Heart left ventricle (tissue), 16 donors: ENCODE measurements at regions of chr5 and their contacts with region 1.

Region 1: GRCh38 chr5:147391781-147392180 is 118.1 kb downstream of the DPYSL3 start:
- DNase-seq: peak in 2 of 5 donors; percentile 45 to 66
- ATAC-seq: peak in 3 of 4 donors; percentile 71 to 90 (median 83)
- H3K4me3 ChIP-seq: no peak overlapping the region
- H3K27ac ChIP-seq: no peak overlapping the region
- H3K4me1 ChIP-seq: peaks cover 0 to 9% (median 0%) of the 10 kb centered on the region in 12 donors
- H3K27me3 ChIP-seq: no peaks in the 10 kb centered on the region
- CTCF ChIP-seq: peak in 11 of 12 donors; percentile 24 to 59 (median 40)
- POLR2A ChIP-seq: no peak

Region 2: GRCh38 chr5:147567917-147568598 is 176.3 kb after region 1 on chr5:
- intact Hi-C with region 1: loop called in 2 of 10 experiments (anchors 10 kb)
- DNase-seq: no peak
- ATAC-seq: no peak
- H3K4me3 ChIP-seq: no peak overlapping the region
- H3K27ac ChIP-seq: no peak overlapping the region
- H3K4me1 ChIP-seq: peaks cover 0 to 1% (median 0%) of the 10 kb centered on the region in 12 donors
- H3K27me3 ChIP-seq: no peaks in the 10 kb centered on the region
- CTCF ChIP-seq: no peak
- POLR2A ChIP-seq: no peak

Region 3: GRCh38 chr5:147576646-147577535 is 185.1 kb after region 1 on chr5:
- intact Hi-C with region 1: loop called in 1 of 10 experiments (anchors 10 kb)
- DNase-seq: peak in 3 of 5 donors; percentile 38 to 44 (median 41)
- ATAC-seq: peak in 3 of 4 donors; percentile 51 to 76 (median 65)
- H3K4me3 ChIP-seq: no peak overlapping the region
- H3K27ac ChIP-seq: no peak overlapping the region
- H3K4me1 ChIP-seq: peaks cover 0 to 7% (median 0%) of the 10 kb centered on the region in 12 donors
- H3K27me3 ChIP-seq: no peaks in the 10 kb centered on the region
- CTCF ChIP-seq: peak; percentile 77 to 89 (median 84)
- POLR2A ChIP-seq: no peak

Region 4: DNA sequence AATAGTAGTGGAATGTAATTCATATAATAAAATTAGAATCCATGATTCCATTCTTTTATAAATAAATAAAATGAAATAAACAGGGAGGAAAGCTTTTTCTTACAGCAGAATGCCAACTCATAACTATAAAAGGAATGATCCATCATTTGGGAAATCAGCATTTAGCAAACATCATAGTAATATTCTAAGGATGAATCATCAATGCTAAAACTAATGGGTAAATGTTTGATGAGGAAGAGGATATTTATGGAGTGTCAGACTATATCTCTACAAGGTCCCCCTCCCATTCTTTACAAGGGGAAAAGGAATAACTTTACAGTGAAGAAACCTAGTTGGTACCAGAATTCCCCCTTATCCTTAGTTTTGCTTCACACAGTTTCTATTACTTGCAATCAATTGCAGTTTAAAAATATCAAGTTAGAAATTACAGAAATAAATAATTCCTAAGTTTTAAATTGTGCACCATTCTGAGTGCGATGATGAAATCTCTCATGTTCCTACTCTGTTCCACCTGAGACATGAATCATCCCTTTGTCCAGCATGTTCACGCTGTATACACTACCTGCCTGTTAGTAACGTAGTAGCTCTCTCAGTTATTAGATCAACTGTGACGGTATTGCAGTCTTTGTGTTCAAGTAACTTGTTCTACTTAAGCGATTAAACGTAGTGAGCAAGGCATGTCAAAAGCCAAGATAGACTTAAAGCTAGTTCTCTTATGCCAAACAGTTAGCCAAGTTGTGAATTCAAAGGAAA is 405.0 kb after region 1 on chr5:
- intact Hi-C with region 1: no loop called
- DNase-seq: no peak
- ATAC-seq: no peak
- H3K4me3 ChIP-seq: no peak overlapping the region
- H3K27ac ChIP-seq: no peak overlapping the region
- H3K4me1 ChIP-seq: no peaks in the 10 kb centered on the region
- H3K27me3 ChIP-seq: peaks cover 0 to 6% (median 0%) of the 10 kb centered on the region in 9 donors
- CTCF ChIP-seq: no peak
- POLR2A ChIP-seq: no peak